ENCODE measurements at regions of chr19 and their contacts with region 1.

Region 1: GRCh38 chr19:2578901-2579677 is 103.2 kb downstream of the GADD45B start:
- DNase-seq: peak; percentile 78
- ATAC-seq: peak; percentile 85
- H3K4me3 ChIP-seq: peak overlapping the region; percentile 48 to 64
- H3K27ac ChIP-seq: peak overlapping the region; percentile 59
- H3K4me1 ChIP-seq: peaks cover 27 to 39% of the 10 kb centered on the region in 2 experiments
- H3K27me3 ChIP-seq: no peaks in the 10 kb centered on the region
- CTCF ChIP-seq: peak; percentile 86 to 90 (median 88)
- POLR2A ChIP-seq: no peak
- RAD21 ChIP-seq: peak; percentile 99

Region 2: DNA sequence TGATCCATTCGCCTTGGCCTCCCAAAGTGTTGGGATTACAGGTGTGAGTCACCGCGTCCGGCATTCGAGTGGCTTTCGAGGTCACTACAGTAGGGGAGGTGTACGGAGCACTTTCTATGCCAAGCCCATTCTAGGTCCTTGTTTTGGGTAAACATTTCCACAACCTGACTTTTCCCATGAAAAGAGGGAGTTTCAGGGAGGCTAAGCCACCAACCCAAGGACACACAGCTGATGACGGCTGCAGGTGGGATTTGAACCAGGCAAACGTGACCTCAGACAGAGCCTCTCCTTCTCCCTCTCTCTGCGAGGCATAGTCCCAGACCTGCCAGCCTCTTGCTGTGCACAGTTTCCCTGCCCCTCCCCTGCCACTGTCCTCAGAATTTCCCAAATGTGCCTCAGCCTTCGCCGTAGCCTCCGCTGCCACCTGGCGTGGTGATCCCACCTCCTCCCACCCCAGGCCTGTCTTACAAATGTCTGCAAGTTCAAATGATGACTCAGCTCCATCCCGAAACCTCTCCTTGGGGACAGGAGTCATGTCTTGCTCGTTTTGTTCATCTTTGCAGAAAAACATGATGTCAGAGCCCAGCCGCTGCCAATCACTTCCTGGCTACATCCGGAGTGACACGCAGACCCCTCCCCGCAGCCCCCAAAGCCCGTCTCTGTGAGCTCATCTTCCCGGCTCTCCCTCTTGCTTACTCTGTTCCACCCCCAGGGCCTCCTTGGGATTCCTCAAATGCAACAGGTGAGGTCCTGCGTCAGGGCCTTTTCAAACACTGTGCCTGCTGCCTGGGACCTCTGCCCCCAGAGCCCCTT is 109.8 kb before region 1 on chr19:
- CTCF ChIA-PET with region 1: interaction called, 20 read pairs
- POLR2A ChIA-PET with region 1: interaction called, 6 read pairs
- RAD21 ChIA-PET with region 1: interaction called in 1 of 2 experiments, 6 read pairs
- intact Hi-C with region 1: no loop called
- DNase-seq: peak; percentile 80
- ATAC-seq: peak; percentile 75
- H3K4me3 ChIP-seq: peak overlapping the region in 1 of 2 experiments; percentile 41; a peak in 2 of 4 replicates
- H3K27ac ChIP-seq: peak overlapping the region; percentile 54
- H3K4me1 ChIP-seq: peaks cover 21 to 41% of the 10 kb centered on the region in 2 experiments
- H3K27me3 ChIP-seq: no peaks in the 10 kb centered on the region
- CTCF ChIP-seq: no peak
- POLR2A ChIP-seq: no peak
- RAD21 ChIP-seq: no peak

Region 3: GRCh38 chr19:2543463-2544442 is 35.3 kb before region 1 on chr19:
- CTCF ChIA-PET with region 1: interaction called, 5 read pairs
- POLR2A ChIA-PET with region 1: interaction called, 5 read pairs
- RAD21 ChIA-PET with region 1: no interaction called
- intact Hi-C with region 1: loop called (anchors 2 kb)
- DNase-seq: peak; percentile 91
- ATAC-seq: peak; percentile 82
- H3K4me3 ChIP-seq: peak overlapping the region; percentile 16 to 20; a peak in 2 of 4 replicates
- H3K27ac ChIP-seq: peak overlapping the region; percentile 80
- H3K4me1 ChIP-seq: peaks cover 51 to 77% of the 10 kb centered on the region in 2 experiments
- H3K27me3 ChIP-seq: no peaks in the 10 kb centered on the region
- CTCF ChIP-seq: peak in 1 of 3 experiments; percentile 25; a peak in 2 of 6 replicates
- POLR2A ChIP-seq: no peak
- RAD21 ChIP-seq: peak; percentile 63

Region 4: GRCh38 chr19:2561895-2562294 is 17.2 kb before region 1 on chr19:
- CTCF ChIA-PET with region 1: no interaction called
- POLR2A ChIA-PET with region 1: no interaction called
- RAD21 ChIA-PET with region 1: no interaction called
- intact Hi-C with region 1: no loop called
- DNase-seq: no peak
- ATAC-seq: no peak
- H3K4me3 ChIP-seq: no peak overlapping the region
- H3K27ac ChIP-seq: no peak overlapping the region
- H3K4me1 ChIP-seq: no peaks in the 10 kb centered on the region
- H3K27me3 ChIP-seq: no peaks in the 10 kb centered on the region
- CTCF ChIP-seq: no peak
- POLR2A ChIP-seq: no peak
- RAD21 ChIP-seq: no peak

Region 5: GRCh38 chr19:2610637-2611482 is 31.8 kb after region 1 on chr19:
- CTCF ChIA-PET with region 1: interaction called, 22 read pairs
- POLR2A ChIA-PET with region 1: interaction called, 4 read pairs
- RAD21 ChIA-PET with region 1: interaction called, 4 to 6 read pairs
- intact Hi-C with region 1: loop called (anchors 2 kb)
- DNase-seq: peak; percentile 59
- ATAC-seq: peak; percentile 94
- H3K4me3 ChIP-seq: peak overlapping the region; percentile 36 to 51
- H3K27ac ChIP-seq: no peak overlapping the region
- H3K4me1 ChIP-seq: peaks cover 8 to 21% of the 10 kb centered on the region in 2 experiments; a peak in 3 of 4 replicates
- H3K27me3 ChIP-seq: no peaks in the 10 kb centered on the region
- CTCF ChIP-seq: peak; percentile 90 to 95 (median 91)
- POLR2A ChIP-seq: no peak
- RAD21 ChIP-seq: peak; percentile 99